Naive thymus-derived CD4-positive, alpha-beta T cell (primary cell): ENCODE measurements at regions of chr4 and their contacts with region 1.

Region 1: DNA sequence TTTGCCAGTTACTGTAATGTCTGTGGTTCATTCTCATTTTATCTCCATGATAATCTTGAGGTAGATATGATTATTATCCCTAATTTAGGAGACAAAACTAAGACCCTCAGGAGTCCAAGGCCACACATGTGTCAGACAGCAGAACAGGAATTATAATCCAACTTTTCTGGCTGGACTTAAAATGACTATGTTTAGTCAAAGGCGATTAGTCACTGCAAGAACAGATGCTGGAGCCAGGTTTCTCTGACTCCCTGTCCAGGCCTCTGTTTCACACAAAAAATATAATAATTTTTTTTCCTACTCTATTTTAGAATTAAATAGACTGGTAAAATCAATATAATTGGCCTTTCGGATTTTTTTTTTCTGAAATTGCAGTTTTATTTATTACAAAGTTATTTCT is 56.7 kb upstream of the TMEM131L start:
- DNase-seq: no peak
- ATAC-seq: no peak
- H3K4me3 ChIP-seq: no peak overlapping the region
- H3K4me3 Mint-ChIP-seq: no peak overlapping the region
- H3K27ac ChIP-seq: no peak overlapping the region
- H3K27ac Mint-ChIP-seq: no peak overlapping the region
- H3K4me1 ChIP-seq: peaks cover 0 to 3% of the 10 kb centered on the region in 2 donors
- H3K4me1 Mint-ChIP-seq: peaks cover 2 to 22% (median 13%) of the 10 kb centered on the region in 7 donors
- H3K27me3 ChIP-seq: no peaks in the 10 kb centered on the region
- H3K27me3 Mint-ChIP-seq: no peaks in the 10 kb centered on the region

Region 2: DNA sequence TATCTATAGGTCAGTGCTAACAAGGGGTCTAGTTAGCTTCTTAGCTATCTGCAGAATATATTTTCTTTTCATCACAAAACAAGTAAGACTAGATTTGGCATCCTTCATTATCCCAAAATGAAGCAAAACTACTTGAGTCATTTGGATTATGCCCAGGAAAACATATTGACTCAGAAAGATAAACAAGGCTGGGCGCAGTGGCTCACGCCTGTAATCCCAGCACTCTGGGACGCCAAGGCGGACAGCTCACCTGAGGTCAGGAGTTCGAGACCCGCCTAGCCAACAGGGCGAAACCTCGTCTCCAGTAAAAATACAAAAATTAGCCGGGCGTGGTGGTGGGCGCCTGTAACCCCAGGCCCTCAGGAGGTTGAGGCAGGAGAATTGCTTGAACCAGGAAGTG is 82.9 kb before region 1 on chr4:
- CTCF ChIA-PET with region 1: no interaction called
- POLR2A ChIA-PET with region 1: no interaction called
- intact Hi-C with region 1: no loop called
- DNase-seq: no peak
- ATAC-seq: no peak
- H3K4me3 ChIP-seq: no peak overlapping the region
- H3K4me3 Mint-ChIP-seq: no peak overlapping the region
- H3K27ac ChIP-seq: no peak overlapping the region
- H3K27ac Mint-ChIP-seq: no peak overlapping the region
- H3K4me1 ChIP-seq: no peaks in the 10 kb centered on the region
- H3K4me1 Mint-ChIP-seq: no peaks in the 10 kb centered on the region
- H3K27me3 ChIP-seq: no peaks in the 10 kb centered on the region
- H3K27me3 Mint-ChIP-seq: peaks cover 0 to 15% (median 0%) of the 10 kb centered on the region in 5 donors

Region 3: DNA sequence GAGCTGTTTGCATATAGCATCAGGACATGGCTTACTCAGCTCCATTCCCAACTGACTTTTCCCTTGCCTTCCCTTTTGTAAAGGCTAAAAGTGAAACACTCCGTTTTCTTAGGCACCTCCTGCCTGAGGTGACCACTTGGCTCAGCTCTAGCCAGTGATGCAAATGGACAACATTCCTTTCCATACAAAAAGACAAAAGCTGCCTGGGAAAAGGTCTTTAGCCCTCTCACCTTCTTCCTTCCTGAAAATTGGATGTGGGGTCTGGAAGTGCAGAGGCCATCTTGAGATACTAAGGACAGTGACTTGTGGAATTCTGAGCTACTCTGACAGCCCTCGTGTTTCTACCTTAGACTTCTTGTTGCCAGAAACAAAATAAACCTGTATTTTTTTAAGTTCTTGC is 407.1 kb after region 1 on chr4:
- CTCF ChIA-PET with region 1: no interaction called
- POLR2A ChIA-PET with region 1: no interaction called
- intact Hi-C with region 1: loop called in 1 of 2 experiments (anchors 5 kb)
- DNase-seq: no peak
- ATAC-seq: no peak
- H3K4me3 ChIP-seq: no peak overlapping the region
- H3K4me3 Mint-ChIP-seq: no peak overlapping the region
- H3K27ac ChIP-seq: no peak overlapping the region
- H3K27ac Mint-ChIP-seq: no peak overlapping the region
- H3K4me1 ChIP-seq: no peaks in the 10 kb centered on the region
- H3K4me1 Mint-ChIP-seq: peaks cover 0 to 2% (median 0%) of the 10 kb centered on the region in 7 donors
- H3K27me3 ChIP-seq: no peaks in the 10 kb centered on the region
- H3K27me3 Mint-ChIP-seq: peaks cover 0 to 27% (median 14%) of the 10 kb centered on the region in 5 donors